GM12878 (cell line): ENCODE measurements at regions of chr21 and their contacts with region 1.

Region 1: GRCh38 chr21:34091607-34092006 is 18.2 kb downstream of the MRPS6 start:
- DNase-seq: no peak
- ATAC-seq: peak; percentile 50
- H3K4me3 ChIP-seq: no peak overlapping the region
- H3K27ac ChIP-seq: no peak overlapping the region
- H3K4me1 ChIP-seq: no peaks in the 10 kb centered on the region; the same call in 1 of the 2 replicates
- H3K27me3 ChIP-seq: no peaks in the 10 kb centered on the region
- CTCF ChIP-seq: peak; percentile 22 to 46 (median 39); a peak in 4 of 6 replicates
- EP300 ChIP-seq: no peak
- POLR2A ChIP-seq: no peak
- RAD21 ChIP-seq: peak; percentile 28; the same call in 1 of the 2 replicates

Region 2: GRCh38 chr21:34073032-34073869 is 18.4 kb before region 1 on chr21 and contains the starts of genes MRPS6 and SLC5A3:
- CTCF ChIA-PET with region 1: interaction called, 6 read pairs
- POLR2A ChIA-PET with region 1: interaction called, 4 read pairs
- RAD21 ChIA-PET with region 1: interaction called, 4 read pairs
- SMC1A ChIA-PET with region 1: interaction called, 32 read pairs
- in situ Hi-C with region 1: no loop called
- intact Hi-C with region 1: no loop called
- DNase-seq: no peak
- ATAC-seq: peak; percentile 75
- H3K4me3 ChIP-seq: peak within 1 kb of the TSS; percentile 91
- H3K27ac ChIP-seq: peak within 1 kb of the TSS; percentile 72
- H3K4me1 ChIP-seq: peaks cover 11% of the 10 kb centered on the region
- H3K27me3 ChIP-seq: no peaks in the 10 kb centered on the region
- CTCF ChIP-seq: no peak; a peak in 1 of 6 replicates
- EP300 ChIP-seq: no peak; a peak in 1 of 4 replicates
- POLR2A ChIP-seq: peak; percentile 98
- RAD21 ChIP-seq: no peak
- polyA plus RNA-seq, gene MRPS6: 55.6 to 95.2 TPM
- polyA plus RNA-seq, gene SLC5A3: 3.3 to 4.7 TPM

Region 3: DNA sequence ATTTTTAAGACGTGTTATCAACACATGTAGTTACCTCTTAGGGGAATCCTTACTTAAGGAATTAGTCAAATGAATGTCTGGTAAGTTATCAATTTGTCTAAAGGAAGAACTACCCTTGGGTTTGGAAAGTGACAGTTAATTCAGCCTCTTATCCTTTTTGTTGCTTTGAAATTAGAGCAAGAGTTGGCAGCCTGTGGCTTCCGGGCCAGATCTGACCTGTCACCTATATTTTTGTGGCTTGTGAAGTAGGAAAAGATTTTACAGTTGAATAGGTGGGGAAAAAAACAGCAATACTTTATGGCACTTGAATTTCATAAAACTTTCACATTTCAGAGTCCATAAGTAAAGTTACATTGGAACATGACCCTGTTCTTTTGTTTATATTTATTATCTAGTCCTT is 12.7 kb before region 1 on chr21:
- CTCF ChIA-PET with region 1: interaction called, 24 read pairs
- POLR2A ChIA-PET with region 1: interaction called, 8 read pairs
- RAD21 ChIA-PET with region 1: interaction called, 4 read pairs
- SMC1A ChIA-PET with region 1: interaction called, 32 read pairs
- in situ Hi-C with region 1: no loop called
- intact Hi-C with region 1: no loop called
- DNase-seq: no peak
- ATAC-seq: peak; percentile 8; the same call in 2 of the 3 replicates
- H3K4me3 ChIP-seq: 0 out of 2 replicates have a peak overlapping the region, but pooled peaks have one; percentile 16
- H3K27ac ChIP-seq: 0 out of 2 replicates have a peak overlapping the region, but pooled peaks have one; percentile 9
- H3K4me1 ChIP-seq: peaks cover 32% of the 10 kb centered on the region
- H3K27me3 ChIP-seq: no peaks in the 10 kb centered on the region
- CTCF ChIP-seq: no peak
- EP300 ChIP-seq: no peak
- POLR2A ChIP-seq: no peak
- RAD21 ChIP-seq: no peak